ENCODE measurements at regions of chr12 and their contacts with region 1.

Region 1: DNA sequence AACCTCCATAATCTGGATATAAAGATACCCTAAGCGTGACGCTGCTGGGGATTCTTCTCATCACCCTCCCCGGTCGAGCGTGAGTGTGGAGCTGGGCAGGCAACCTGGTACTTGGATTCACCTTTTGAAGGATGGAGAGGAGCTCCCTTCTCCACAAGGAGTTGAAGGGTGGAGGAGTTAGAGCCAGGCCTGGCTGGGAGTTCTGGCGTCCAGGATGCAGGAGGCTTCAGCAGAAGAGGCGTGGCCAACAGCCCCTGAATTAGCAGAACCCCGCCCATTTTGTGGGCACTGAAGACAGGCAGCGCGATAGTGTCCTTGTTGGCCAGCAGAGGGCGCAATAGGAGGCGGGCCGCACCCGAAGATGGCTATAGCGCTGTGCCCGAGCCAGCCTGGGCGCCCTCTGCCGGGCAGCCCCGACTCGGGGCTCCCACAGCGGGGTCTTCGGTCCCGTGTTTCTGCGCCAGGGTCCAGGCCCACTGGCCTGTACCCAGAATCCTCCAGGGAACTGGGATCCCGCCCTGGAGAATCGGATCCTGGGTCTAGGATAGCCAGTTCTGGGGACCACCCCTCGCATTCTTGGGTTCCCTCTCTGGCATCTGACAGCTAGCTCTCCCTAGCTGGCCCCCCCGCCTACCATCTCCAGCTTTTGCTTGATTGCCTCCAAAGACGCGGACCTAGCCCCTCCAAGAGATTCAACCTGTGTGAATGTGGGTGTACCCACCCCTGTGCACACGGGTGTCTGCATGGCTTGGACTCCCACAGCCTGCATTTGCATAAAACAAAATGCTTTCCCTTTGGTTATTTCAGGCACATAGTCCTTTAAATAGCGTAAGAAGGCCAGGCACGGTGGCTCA is 26.0 kb upstream of the SMUG1 start:
- DNase-seq: no peak
- H3K4me3 ChIP-seq: peak overlapping the region; percentile 36
- CTCF ChIP-seq: peak; percentile 99

Region 2: GRCh38 chr12:53659011-53659551 is 555.7 kb before region 1 on chr12:
- CTCF ChIA-PET with region 1: no interaction called
- POLR2A ChIA-PET with region 1: no interaction called
- DNase-seq: no peak
- H3K4me3 ChIP-seq: no peak overlapping the region
- CTCF ChIP-seq: no peak

Region 3: GRCh38 chr12:53770281-53770680 is 444.5 kb before region 1 on chr12:
- CTCF ChIA-PET with region 1: interaction called, 19 read pairs
- POLR2A ChIA-PET with region 1: no interaction called
- DNase-seq: peak; percentile 90
- H3K4me3 ChIP-seq: no peak overlapping the region
- CTCF ChIP-seq: no peak

Region 4: GRCh38 chr12:53995378-53996239 is 219.2 kb before region 1 on chr12:
- CTCF ChIA-PET with region 1: interaction called, 756 read pairs
- POLR2A ChIA-PET with region 1: no interaction called
- DNase-seq: no peak
- H3K4me3 ChIP-seq: peak overlapping the region; percentile 96
- CTCF ChIP-seq: no peak

Region 5: GRCh38 chr12:54032627-54033100 is 182.1 kb before region 1 on chr12 and contains the start of gene HOXC5:
- CTCF ChIA-PET with region 1: interaction called, 908 read pairs
- POLR2A ChIA-PET with region 1: no interaction called
- DNase-seq: no peak
- H3K4me3 ChIP-seq: peak within 1 kb of the TSS; percentile 49
- CTCF ChIP-seq: peak; percentile 86

Region 6: GRCh38 chr12:54259194-54260011 is 44.6 kb after region 1 on chr12:
- CTCF ChIA-PET with region 1: interaction called, 23 read pairs
- POLR2A ChIA-PET with region 1: no interaction called
- DNase-seq: no peak
- H3K4me3 ChIP-seq: peak overlapping the region; percentile 2
- CTCF ChIP-seq: no peak

Region 7: GRCh38 chr12:54337280-54337842 is 122.6 kb after region 1 on chr12:
- CTCF ChIA-PET with region 1: interaction called, 14 read pairs
- POLR2A ChIA-PET with region 1: no interaction called
- DNase-seq: no peak
- H3K4me3 ChIP-seq: no peak overlapping the region
- CTCF ChIP-seq: no peak

Region 8: DNA sequence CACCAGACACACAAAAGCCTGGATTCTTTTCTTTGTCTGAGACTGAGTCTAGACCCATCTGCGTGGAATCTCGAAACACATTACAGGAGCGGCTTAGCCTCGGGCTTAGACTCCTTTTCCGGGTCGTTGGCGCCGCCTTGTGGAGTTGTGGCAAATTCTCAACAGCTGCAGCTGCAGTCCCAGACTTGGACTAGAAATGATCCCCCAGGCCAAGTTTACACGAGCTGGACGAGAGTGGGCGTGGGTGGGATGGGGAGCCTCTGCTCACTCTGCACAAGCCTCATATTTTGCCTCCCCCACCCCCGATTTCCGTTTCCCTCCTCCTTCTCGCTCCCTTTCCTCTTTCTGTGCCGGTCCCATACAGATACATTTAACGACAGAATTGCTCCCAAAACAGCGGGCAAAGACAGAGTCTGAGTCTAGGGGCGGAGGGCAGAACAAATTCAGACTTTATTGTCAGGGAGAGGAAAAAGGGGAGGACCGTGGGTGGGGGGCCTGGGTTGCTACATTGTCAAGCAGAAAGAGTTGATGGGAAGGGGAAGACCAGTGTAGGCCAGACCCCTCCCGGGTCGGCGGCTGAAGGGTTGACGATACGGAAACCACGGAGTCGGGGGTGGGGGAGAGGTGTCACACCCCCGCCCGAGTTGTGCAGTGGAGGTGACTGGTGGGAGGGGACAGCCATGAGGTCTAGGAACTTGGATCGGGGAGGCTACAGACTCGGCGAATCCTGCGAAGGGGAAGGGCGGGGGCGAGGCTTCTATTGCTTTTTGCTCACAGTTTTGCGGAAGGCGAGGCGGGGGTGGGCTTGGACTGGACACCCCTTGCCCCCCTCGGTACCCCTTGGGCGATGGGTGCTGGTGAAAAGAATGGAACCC is 154.2 kb after region 1 on chr12:
- CTCF ChIA-PET with region 1: interaction called, 98 read pairs
- POLR2A ChIA-PET with region 1: no interaction called
- DNase-seq: peak; percentile 34
- H3K4me3 ChIP-seq: no peak overlapping the region
- CTCF ChIP-seq: peak; percentile 85

Region 9: GRCh38 chr12:54522243-54522642 is 307.5 kb after region 1 on chr12:
- CTCF ChIA-PET with region 1: no interaction called
- POLR2A ChIA-PET with region 1: no interaction called
- DNase-seq: no peak
- H3K4me3 ChIP-seq: no peak overlapping the region
- CTCF ChIP-seq: no peak

Region 10: GRCh38 chr12:54650409-54650808 is 435.6 kb after region 1 on chr12:
- CTCF ChIA-PET with region 1: no interaction called
- POLR2A ChIA-PET with region 1: no interaction called
- DNase-seq: no peak
- H3K4me3 ChIP-seq: no peak overlapping the region
- CTCF ChIP-seq: no peak

Region 11: DNA sequence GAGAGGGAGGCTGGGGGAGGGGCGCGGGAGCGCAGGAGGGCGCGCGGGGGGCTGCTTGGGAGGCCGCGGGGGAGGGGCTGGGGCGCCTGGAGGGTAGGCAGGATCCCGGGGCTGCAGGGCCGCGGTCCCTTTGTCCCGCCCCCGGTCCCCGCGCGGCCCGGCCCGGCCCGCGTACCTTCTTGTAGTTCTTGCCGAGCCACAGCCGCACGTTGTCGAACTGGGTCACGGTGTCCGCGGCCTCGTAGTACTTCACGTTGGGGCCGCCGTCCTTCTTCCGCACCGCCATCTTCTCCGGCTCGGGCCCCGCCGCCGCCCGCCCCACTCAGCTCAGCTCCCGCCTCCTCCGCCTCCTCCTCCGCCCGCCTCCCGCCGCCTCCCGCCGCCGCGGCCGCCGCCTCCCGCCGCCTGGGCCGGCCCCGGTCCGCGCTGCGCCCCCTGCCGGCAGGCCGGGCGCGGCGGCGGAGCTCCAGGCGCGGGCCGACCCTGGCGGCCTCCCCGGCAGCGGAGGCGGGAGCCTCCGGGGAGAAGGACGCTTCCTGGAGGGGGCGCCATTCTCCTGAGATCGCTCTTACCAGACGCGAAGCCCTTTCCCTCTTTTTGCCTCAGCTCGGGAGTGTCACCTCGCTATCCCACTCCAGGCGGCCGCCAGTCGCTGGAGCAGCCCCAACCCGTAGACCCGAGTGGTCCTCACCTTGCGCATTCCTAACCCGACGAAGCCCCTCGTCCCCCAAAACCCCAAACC is 1974.6 kb after region 1 on chr12 and contains the start of gene SMARCC2:
- CTCF ChIA-PET with region 1: no interaction called
- POLR2A ChIA-PET with region 1: no interaction called
- DNase-seq: no peak
- H3K4me3 ChIP-seq: peak within 1 kb of the TSS; percentile 82
- CTCF ChIP-seq: peak; percentile 87